Cardiac septum (tissue), 1 donor: ENCODE measurements at regions of chr1 and their contacts with region 1.

Region 1: GRCh38 chr1:37682334-37682987 is 9.9 kb upstream of the CDCA8 start:
- DNase-seq: no peak

Region 2: GRCh38 chr1:37561133-37562132 is 121.0 kb before region 1 on chr1:
- intact Hi-C with region 1: loop called (anchors 5 kb)
- DNase-seq: no peak

Region 3: GRCh38 chr1:37602750-37603694 is 79.4 kb before region 1 on chr1:
- intact Hi-C with region 1: loop called (anchors 2 kb)
- DNase-seq: no peak

Region 4: DNA sequence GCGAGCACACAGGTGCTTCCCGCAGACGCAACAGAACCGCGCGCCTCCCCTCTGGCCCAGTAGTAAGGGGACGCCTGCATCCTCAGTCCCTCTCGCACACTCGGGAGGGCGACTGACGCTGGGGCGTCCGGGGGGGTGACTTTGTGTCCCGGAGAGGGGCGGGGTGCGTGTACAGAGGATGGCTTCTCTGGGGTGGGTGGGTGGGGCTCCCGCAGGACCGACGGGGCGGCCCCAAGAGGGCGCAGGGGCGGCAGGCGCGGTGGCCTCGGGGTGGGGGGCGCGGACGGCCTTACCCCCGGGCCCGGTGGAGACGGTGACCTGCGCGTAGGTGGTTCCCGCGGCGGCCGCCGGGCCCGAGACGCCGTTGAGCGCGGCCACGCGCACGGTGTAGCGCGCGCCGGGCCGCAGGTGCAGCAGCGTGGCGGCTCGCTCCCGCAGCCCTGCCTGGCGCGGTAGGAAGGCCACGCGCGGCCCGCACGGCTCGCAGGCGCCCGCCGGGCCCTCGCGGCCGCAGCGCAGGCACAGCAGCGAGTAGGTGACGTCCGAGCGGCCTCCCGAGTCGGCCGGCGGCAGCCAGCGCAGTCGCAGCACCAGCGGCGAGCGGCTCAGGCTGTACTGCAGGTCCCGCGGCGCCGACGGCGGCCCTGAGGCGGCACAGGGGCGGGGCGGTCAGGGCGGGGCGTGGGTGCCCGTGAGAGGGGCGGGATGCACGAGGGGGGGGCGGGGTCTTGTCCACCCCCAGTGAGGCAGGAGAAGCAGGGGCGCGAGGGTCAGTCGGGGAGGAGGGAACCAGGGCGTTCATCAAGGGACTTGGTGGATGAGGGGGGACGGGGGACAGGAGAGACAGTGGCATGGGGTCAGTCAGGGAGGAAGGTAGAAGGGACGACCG is 70.4 kb after region 1 on chr1:
- intact Hi-C with region 1: no loop called
- DNase-seq: no peak